ENCODE measurements at regions of chr14 and their contacts with region 1.

Region 1: GRCh38 chr14:35201066-35201465 is 78.7 kb downstream of the PRORP start:
- DNase-seq: peak; percentile 36
- ATAC-seq: peak; percentile 51
- H3K4me3 Mint-ChIP-seq: no peak overlapping the region
- H3K27ac Mint-ChIP-seq: peak overlapping the region; percentile 85
- H3K4me1 Mint-ChIP-seq: peaks cover 45% of the 10 kb centered on the region
- H3K27me3 Mint-ChIP-seq: no peaks in the 10 kb centered on the region
- CTCF ChIP-seq: no peak

Region 2: DNA sequence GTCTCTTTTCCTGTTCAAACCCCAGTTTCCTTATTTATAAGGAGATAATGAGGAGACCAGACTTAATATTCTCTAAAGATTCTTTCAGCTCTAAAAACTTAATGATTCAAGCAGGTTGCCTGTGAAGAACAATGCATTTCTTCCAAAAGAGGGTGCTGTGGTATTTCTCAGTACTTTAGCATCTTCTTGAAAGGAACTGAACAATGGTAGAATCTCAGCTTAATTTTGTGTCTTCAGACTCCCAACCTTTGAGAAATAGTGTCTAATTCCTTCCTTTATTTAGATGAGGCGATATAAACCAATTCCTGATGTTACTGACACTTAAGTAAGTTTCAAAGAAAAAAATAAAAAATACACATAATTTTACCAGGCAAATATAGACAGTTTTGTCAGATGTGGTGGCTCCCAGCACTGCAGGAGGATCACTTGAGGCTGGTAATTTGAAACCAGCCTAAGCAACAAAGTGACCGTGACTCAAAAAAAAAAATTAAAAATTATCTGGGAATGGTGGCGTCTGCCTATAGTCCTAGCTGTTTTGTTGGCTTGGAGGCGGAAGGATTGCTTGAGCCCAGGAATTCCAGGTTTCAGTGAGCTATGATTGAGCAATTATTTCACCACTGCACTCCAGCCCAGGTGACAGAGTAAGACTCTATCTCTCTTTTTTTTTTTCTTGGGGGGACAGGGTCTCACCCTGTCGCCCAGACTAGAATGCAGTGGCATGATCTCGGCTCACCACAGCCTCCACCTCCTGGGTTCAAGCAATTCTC is 14.2 kb after region 1 on chr14:
- CTCF ChIA-PET with region 1: interaction called, 10 read pairs
- POLR2A ChIA-PET with region 1: no interaction called
- intact Hi-C with region 1: no loop called
- DNase-seq: no peak
- ATAC-seq: no peak
- H3K4me3 Mint-ChIP-seq: no peak overlapping the region
- H3K27ac Mint-ChIP-seq: no peak overlapping the region
- H3K4me1 Mint-ChIP-seq: peaks cover 12% of the 10 kb centered on the region
- H3K27me3 Mint-ChIP-seq: no peaks in the 10 kb centered on the region
- CTCF ChIP-seq: no peak

Measured in activated CD8-positive, alpha-beta T cell treated with anti-CD3 and anti-CD28 coated beads for 36 hours (primary cell).